Adrenal gland (tissue), 19 donors: ENCODE measurements at regions of chr11 and their contacts with region 1.

Region 1: GRCh38 chr11:57249384-57250319 is 12.6 kb upstream of the APLNR start:
- DNase-seq: peak; percentile 40 to 85 (median 67)
- H3K4me3 ChIP-seq: no peak overlapping the region
- H3K27ac ChIP-seq: no peak overlapping the region
- H3K4me1 ChIP-seq: peaks cover 0 to 6% of the 10 kb centered on the region in 2 donors
- H3K27me3 ChIP-seq: no peaks in the 10 kb centered on the region
- CTCF ChIP-seq: peak; percentile 77 to 93 (median 86)
- POLR2A ChIP-seq: no peak

Region 2: GRCh38 chr11:56841210-56841810 is 408.3 kb before region 1 on chr11:
- intact Hi-C with region 1: loop called (anchors 2 to 5 kb)
- DNase-seq: peak; percentile 25 to 71 (median 48)
- H3K4me3 ChIP-seq: no peak overlapping the region
- H3K27ac ChIP-seq: no peak overlapping the region
- H3K4me1 ChIP-seq: no peaks in the 10 kb centered on the region
- H3K27me3 ChIP-seq: peaks cover 6% of the 10 kb centered on the region
- CTCF ChIP-seq: peak; percentile 39 to 76 (median 70)
- POLR2A ChIP-seq: no peak

Region 3: GRCh38 chr11:57116654-57117053 is 133.0 kb before region 1 on chr11:
- intact Hi-C with region 1: loop called (anchors 5 kb)
- DNase-seq: peak; percentile 33 to 72 (median 44)
- H3K4me3 ChIP-seq: no peak overlapping the region
- H3K27ac ChIP-seq: no peak overlapping the region
- H3K4me1 ChIP-seq: no peaks in the 10 kb centered on the region
- H3K27me3 ChIP-seq: no peaks in the 10 kb centered on the region
- CTCF ChIP-seq: peak; percentile 13 to 68 (median 59)
- POLR2A ChIP-seq: no peak

Region 4: DNA sequence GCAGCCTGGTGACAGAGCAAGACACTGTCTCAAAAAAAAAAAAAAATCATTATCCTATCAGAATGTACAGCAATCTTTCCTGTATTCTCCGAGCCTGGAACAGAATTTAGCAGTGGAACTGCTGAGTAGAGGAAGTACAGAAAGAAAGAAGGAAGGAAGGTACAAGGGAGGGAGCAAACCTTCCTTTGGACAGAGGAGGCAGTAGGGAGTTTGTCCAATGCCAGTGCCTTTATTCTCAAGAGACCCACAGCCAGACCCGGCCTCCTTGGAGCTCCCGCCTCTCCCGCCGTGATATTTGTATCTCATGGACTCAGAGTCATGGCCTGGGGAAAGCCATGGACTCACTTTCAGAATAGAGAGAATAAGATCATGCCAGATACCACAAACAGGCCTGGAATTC is 105.6 kb before region 1 on chr11:
- intact Hi-C with region 1: loop called in 1 of 2 experiments (anchors 10 kb)
- DNase-seq: no peak
- H3K4me3 ChIP-seq: no peak overlapping the region
- H3K27ac ChIP-seq: no peak overlapping the region
- H3K4me1 ChIP-seq: no peaks in the 10 kb centered on the region
- H3K27me3 ChIP-seq: no peaks in the 10 kb centered on the region
- CTCF ChIP-seq: no peak
- POLR2A ChIP-seq: no peak